ENCODE measurements at regions of chr6 and their contacts with region 1.

Region 1: GRCh38 chr6:16752236-16752867 is 8.9 kb downstream of the ATXN1 start:
- DNase-seq: peak; percentile 90 to 96 (median 95)
- H3K4me3 ChIP-seq: peak overlapping the region in 1 of 3 experiments; percentile 13
- H3K4me3 Mint-ChIP-seq: peak overlapping the region in 1 of 2 donors; percentile 51
- H3K27ac ChIP-seq: peak overlapping the region; percentile 67 to 81
- H3K27ac Mint-ChIP-seq: peak overlapping the region; percentile 86 to 94 (median 93)
- H3K4me1 ChIP-seq: peaks cover 39 to 74% of the 10 kb centered on the region in 2 donors
- H3K4me1 Mint-ChIP-seq: peaks cover 72% of the 10 kb centered on the region
- H3K27me3 ChIP-seq: no peaks in the 10 kb centered on the region
- H3K27me3 Mint-ChIP-seq: no peaks in the 10 kb centered on the region
- CTCF ChIP-seq: no peak

Region 2: DNA sequence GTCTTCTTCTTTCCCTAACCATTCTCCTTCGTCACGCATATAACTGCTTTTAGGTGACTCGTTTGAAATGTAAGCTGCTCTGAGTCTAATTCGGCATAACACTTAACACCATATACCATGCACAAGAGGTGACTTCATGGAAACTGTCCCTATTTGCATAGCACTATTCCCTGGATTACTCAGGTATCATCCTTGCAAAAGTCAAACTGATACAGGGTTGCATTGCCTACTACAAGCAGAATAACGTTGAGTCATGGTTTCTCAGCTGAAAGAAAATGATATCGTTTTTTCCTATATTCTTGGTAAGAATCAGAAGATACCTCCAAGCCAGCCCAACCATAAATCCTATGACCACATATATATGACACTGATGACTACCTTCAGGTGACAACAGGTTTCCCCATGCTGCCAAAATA is 218.6 kb before region 1 on chr6:
- intact Hi-C with region 1: no loop called
- DNase-seq: no peak
- H3K4me3 ChIP-seq: no peak overlapping the region
- H3K4me3 Mint-ChIP-seq: no peak overlapping the region
- H3K27ac ChIP-seq: no peak overlapping the region
- H3K27ac Mint-ChIP-seq: no peak overlapping the region
- H3K4me1 ChIP-seq: no peaks in the 10 kb centered on the region
- H3K4me1 Mint-ChIP-seq: no peaks in the 10 kb centered on the region
- H3K27me3 ChIP-seq: no peaks in the 10 kb centered on the region
- H3K27me3 Mint-ChIP-seq: no peaks in the 10 kb centered on the region
- CTCF ChIP-seq: no peak

Region 3: GRCh38 chr6:16725145-16725864 is 27.0 kb before region 1 on chr6:
- intact Hi-C with region 1: loop called in 1 of 2 experiments (anchors 2 kb)
- DNase-seq: peak in 2 of 3 donors; percentile 78 to 85
- H3K4me3 ChIP-seq: peak overlapping the region in 1 of 3 experiments; percentile 45
- H3K4me3 Mint-ChIP-seq: peak overlapping the region in 1 of 2 donors; percentile 21
- H3K27ac ChIP-seq: peak overlapping the region in 1 of 2 donors; percentile 87
- H3K27ac Mint-ChIP-seq: peak overlapping the region; percentile 95 to 99 (median 96)
- H3K4me1 ChIP-seq: peaks cover 62 to 69% of the 10 kb centered on the region in 2 donors
- H3K4me1 Mint-ChIP-seq: peaks cover 61% of the 10 kb centered on the region
- H3K27me3 ChIP-seq: no peaks in the 10 kb centered on the region
- H3K27me3 Mint-ChIP-seq: no peaks in the 10 kb centered on the region
- CTCF ChIP-seq: no peak